Caco-2 (cell line): ENCODE measurements at regions of chr1 and their contacts with region 1.

Region 1: GRCh38 chr1:27154991-27155781 is at the start of gene SLC9A1:
- DNase-seq: peak; percentile 89 to 93
- H3K4me3 ChIP-seq: peak within 1 kb of the TSS; percentile 61
- H3K4me3 Mint-ChIP-seq: peak within 1 kb of the TSS; percentile 91
- H3K27ac Mint-ChIP-seq: peak within 1 kb of the TSS; percentile 89
- H3K4me1 ChIP-seq: peaks cover 7% of the 10 kb centered on the region
- H3K4me1 Mint-ChIP-seq: peaks cover 14% of the 10 kb centered on the region
- H3K27me3 ChIP-seq: no peaks in the 10 kb centered on the region
- H3K27me3 Mint-ChIP-seq: no peaks in the 10 kb centered on the region
- CTCF ChIP-seq: peak; percentile 50 to 81
- total RNA-seq, gene SLC9A1: 28.9 and 31.0 TPM in 2 replicates

Region 2: GRCh38 chr1:27111626-27112573 is 43.3 kb before region 1 on chr1:
- CTCF ChIA-PET with region 1: interaction called, 4 read pairs
- POLR2A ChIA-PET with region 1: interaction called, 10 read pairs
- intact Hi-C with region 1: no loop called
- DNase-seq: peak; percentile 29 to 51
- H3K4me3 ChIP-seq: no peak overlapping the region
- H3K4me3 Mint-ChIP-seq: no peak overlapping the region
- H3K27ac Mint-ChIP-seq: no peak overlapping the region
- H3K4me1 ChIP-seq: peaks cover 3% of the 10 kb centered on the region; the same call in 1 of the 2 replicates
- H3K4me1 Mint-ChIP-seq: no peaks in the 10 kb centered on the region
- H3K27me3 ChIP-seq: no peaks in the 10 kb centered on the region
- H3K27me3 Mint-ChIP-seq: no peaks in the 10 kb centered on the region
- CTCF ChIP-seq: no peak

Region 3: DNA sequence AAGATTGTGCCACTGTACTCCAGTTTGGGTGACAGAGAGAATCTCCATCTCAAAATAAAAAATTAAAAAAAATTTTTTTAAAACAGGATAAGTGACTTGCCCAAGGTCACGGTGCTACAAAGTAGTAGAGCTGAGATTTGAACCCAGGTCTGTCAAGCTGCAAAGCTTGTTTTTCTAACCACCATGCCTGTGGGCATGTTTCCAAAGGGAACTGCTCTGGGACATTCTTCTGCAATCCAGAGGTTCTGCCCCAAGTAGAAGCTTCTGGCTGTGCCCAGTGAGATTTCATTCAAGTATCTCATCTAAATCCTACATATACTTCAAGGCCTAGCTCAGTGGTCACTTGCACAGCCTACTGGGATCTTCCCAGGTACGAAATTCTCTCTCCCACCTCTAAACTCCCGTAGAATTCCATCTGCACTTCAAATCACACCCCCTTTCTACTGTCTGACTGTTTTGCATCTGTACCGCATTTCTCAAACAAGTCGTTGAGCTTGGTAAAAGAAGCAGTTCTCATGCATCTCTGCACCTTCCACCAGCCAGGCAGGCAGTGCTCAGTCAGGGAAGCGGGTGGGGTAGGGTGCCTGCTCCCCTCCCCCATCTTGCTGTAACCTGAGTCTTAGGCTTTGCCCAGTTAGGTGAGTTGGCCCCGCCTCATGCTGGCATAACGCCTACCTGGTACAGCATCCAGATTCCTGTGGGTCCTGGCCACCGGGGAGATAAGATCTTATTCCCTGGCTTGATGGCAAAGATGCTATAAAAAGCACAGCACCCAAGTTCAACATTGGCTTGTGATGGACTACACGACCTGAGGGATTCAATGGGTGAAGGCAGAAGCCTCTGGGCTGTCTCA is 13.8 kb before region 1 on chr1:
- CTCF ChIA-PET with region 1: interaction called, 9 read pairs
- POLR2A ChIA-PET with region 1: interaction called, 20 read pairs
- intact Hi-C with region 1: no loop called
- DNase-seq: no peak
- H3K4me3 ChIP-seq: no peak overlapping the region
- H3K4me3 Mint-ChIP-seq: no peak overlapping the region
- H3K27ac Mint-ChIP-seq: no peak overlapping the region
- H3K4me1 ChIP-seq: peaks cover 18% of the 10 kb centered on the region
- H3K4me1 Mint-ChIP-seq: peaks cover 37% of the 10 kb centered on the region
- H3K27me3 ChIP-seq: no peaks in the 10 kb centered on the region
- H3K27me3 Mint-ChIP-seq: no peaks in the 10 kb centered on the region
- CTCF ChIP-seq: no peak

Region 4: DNA sequence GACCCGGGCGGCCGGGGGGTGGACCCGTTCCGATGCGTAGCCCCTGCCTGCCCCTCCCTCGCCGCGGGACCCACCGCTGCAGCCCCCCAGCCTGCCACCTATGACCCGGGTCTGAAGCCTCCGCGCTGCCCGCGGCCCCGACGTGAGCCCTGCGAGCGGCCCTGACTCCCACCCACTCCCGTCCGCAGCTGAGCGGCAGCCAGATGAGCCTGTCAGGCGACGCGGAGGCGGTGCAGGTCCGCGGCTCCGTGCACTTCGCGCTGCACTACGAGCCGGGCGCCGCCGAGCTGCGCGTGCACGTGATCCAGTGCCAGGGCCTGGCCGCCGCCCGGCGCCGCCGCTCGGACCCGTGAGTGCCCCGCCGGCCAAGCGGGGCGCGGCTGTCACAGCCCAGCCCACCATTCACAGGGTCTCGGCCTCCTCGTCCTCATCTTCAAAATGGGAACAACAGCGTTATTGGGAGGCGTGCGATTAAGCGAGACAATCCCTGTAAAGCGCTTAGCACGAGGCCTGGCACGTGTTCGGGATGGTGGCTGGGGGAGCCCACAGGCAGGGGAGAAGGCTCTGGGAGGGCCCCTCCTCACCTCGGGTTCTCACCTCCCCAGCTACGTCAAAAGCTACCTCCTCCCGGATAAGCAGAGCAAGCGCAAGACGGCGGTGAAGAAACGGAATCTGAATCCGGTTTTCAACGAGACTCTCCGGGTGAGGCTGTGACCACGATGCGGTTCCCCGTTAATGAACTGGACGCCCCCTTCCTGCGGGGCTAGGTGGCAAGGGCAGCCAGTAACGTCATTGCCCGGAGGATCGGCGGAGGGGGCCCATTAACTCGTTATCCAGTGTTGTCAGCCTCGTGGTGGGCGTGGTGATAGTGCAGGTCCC is 194.8 kb after region 1 on chr1:
- CTCF ChIA-PET with region 1: no interaction called
- POLR2A ChIA-PET with region 1: interaction called, 11 read pairs
- intact Hi-C with region 1: no loop called
- DNase-seq: peak; percentile 83 to 84
- H3K4me3 ChIP-seq: peak overlapping the region; percentile 73
- H3K4me3 Mint-ChIP-seq: peak overlapping the region; percentile 90
- H3K27ac Mint-ChIP-seq: peak overlapping the region; percentile 84
- H3K4me1 ChIP-seq: 0 out of 2 replicates have a peak, but pooled peaks cover 15% of the 10 kb centered on the region
- H3K4me1 Mint-ChIP-seq: peaks cover 13% of the 10 kb centered on the region
- H3K27me3 ChIP-seq: no peaks in the 10 kb centered on the region
- H3K27me3 Mint-ChIP-seq: no peaks in the 10 kb centered on the region
- CTCF ChIP-seq: no peak